Activated CD8-positive, alpha-beta memory T cell treated with anti-CD3 and anti-CD28 coated beads, Interleukin-2, amount 10 ng/mL, durations not matched to agents 7 days and 5 days (primary cell): ENCODE measurements at regions of chr17 and their contacts with region 1.

Region 1: DNA sequence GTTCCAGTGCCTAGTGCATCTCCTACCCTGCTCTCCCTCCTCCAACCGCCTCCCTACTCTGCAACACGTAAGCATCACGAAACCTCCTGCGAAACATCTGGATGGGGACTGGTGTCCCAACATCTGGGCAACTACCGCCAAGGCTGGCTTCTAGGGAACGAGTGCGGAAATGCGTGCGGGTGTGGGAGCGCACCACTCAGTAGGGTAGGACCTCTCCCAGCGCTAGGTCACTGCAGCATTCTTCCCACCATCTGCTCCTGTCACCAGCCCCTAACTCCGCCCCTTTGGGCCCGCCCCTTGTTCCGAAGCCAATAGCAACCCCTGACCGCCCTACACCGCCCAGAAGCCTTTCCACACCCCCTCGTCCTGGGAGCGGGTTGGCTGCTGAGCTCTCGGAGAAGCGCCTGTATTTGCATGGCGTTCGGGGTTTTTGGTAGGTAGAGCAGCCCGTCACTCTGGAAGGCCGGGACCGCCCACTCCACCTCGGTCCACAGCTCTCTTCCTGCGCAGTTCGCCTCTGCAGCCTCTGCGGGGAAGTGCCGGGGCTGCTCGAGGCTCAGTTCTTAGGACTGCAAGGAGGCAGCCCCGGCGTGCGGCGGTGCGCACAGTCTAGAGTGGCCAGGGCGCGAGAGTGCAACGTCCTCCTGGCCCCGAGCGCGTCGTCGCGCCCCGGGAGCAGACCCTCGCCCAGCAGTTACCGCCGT is at the start of gene HS3ST3B1:
- DNase-seq: peak; percentile 100
- ATAC-seq: peak; percentile 90
- H3K4me3 Mint-ChIP-seq: peak within 1 kb of the TSS; percentile 82
- H3K27ac Mint-ChIP-seq: peak within 1 kb of the TSS; percentile 86
- H3K4me1 Mint-ChIP-seq: peaks cover 53% of the 10 kb centered on the region
- H3K27me3 Mint-ChIP-seq: peaks cover 46% of the 10 kb centered on the region
- total RNA-seq, gene HS3ST3B1: 6.9 to 24.9 TPM

Region 2: DNA sequence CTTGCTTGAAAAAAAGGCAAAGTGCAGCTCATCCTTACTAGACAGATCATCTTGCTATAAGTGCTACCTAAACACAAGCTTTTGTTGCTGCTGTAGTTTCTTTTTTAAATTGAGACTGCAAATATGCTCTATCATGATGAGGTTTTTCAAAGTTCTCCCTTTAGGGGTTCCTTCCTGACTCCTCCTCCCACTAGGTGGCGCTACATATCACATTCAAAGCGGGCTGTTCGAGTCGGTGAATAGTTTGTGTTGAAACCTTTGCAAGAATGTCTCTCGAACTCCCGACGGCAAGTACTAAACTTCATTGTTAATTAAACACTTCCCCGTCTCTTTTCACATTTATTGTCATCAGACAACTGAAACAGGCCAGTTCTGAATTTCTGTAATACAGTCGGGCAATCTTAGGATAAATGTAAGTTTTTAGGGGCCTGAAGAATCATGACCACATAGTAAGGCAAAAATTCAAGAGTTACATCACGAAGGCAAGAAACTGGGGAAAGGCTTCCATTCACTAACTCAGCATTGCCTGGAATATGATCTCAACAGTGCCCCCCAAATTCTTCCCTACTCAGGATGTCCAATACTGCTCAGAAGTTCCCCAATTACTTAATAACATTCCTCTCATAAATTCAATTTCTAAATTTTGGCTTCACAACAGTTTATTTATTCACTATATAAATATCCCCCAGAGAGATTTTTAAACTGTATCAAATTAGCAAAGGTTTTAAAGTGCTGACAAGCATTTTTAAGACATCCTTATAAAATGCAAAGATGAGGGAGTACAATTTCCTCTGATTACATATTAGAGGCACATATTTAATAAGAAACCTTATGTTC is 705.7 kb before region 1 on chr17:
- CTCF ChIA-PET with region 1: interaction called, 48 read pairs
- DNase-seq: peak; percentile 82
- ATAC-seq: peak; percentile 77
- H3K4me3 Mint-ChIP-seq: no peak overlapping the region
- H3K27ac Mint-ChIP-seq: no peak overlapping the region
- H3K4me1 Mint-ChIP-seq: peaks cover 6% of the 10 kb centered on the region
- H3K27me3 Mint-ChIP-seq: peaks cover 40% of the 10 kb centered on the region

Region 3: DNA sequence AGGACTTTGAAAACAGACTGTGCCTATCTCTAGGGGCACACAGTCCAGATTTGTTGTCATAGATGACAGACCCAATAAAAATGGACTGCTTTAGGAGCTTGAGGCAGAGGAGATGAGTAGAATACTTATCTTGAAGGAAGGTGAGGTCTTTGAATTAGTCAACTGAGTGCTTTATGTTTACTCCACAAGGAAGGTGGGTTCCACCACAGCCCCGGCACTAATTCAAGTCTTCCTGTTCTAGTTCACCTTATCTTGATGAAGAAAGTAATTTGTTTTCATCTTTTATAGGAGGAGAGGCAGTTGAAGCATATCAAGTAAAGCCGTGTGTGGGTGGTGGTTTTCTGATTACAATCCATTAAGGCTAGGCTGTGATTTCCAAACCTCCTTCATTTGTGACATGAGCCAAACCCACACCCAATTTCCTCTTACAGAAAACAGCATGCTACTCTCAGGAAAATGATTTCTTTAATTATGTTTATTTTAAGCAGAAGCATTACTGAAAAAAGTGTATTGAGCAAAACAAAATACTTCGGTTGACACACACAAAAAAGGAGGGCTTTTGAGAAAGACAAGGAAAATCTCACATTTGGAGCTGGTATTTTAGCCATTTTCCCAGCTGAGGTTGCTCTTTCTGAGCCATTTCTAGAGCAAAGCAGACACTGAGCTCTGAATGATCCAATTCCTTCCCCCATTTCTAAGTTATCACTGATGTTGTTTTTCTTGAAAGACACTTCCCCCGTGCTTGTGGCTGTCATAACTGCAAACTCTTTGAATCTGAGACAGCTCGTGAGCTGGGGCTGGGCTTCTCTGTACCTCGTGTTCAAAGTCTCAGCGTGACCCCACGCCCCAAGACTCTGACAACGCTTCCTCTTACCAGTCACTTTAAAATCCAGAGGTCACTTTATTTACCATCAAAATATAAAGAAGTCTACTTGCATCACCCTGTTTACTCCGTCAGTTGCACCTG is 99.4 kb before region 1 on chr17:
- CTCF ChIA-PET with region 1: interaction called, 15 read pairs
- DNase-seq: peak; percentile 85
- ATAC-seq: peak; percentile 56
- H3K4me3 Mint-ChIP-seq: peak overlapping the region; percentile 32
- H3K27ac Mint-ChIP-seq: peak overlapping the region; percentile 90
- H3K4me1 Mint-ChIP-seq: peaks cover 97% of the 10 kb centered on the region
- H3K27me3 Mint-ChIP-seq: no peaks in the 10 kb centered on the region

Region 4: DNA sequence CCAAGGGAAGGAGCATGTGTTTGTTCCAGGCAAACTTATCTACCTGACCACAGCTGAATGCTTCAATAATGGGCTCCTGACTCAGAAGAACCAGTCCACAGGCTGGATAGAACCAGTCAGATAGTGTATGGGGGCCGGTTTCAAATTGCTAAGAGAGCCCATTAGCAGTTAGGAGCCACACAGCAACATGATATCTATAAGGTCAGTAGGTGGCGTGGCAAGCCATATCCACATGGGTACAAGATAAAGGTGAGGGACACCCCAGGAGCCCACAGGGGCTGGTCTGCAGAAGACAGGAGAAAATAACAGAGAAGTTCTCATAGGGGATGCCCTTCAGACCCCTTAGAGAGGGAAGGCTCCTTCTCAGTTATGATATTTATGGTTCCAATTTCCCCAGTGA is 32.5 kb before region 1 on chr17:
- CTCF ChIA-PET with region 1: no interaction called
- DNase-seq: no peak
- ATAC-seq: no peak
- H3K4me3 Mint-ChIP-seq: no peak overlapping the region
- H3K27ac Mint-ChIP-seq: no peak overlapping the region
- H3K4me1 Mint-ChIP-seq: no peaks in the 10 kb centered on the region
- H3K27me3 Mint-ChIP-seq: peaks cover 11% of the 10 kb centered on the region

Region 5: DNA sequence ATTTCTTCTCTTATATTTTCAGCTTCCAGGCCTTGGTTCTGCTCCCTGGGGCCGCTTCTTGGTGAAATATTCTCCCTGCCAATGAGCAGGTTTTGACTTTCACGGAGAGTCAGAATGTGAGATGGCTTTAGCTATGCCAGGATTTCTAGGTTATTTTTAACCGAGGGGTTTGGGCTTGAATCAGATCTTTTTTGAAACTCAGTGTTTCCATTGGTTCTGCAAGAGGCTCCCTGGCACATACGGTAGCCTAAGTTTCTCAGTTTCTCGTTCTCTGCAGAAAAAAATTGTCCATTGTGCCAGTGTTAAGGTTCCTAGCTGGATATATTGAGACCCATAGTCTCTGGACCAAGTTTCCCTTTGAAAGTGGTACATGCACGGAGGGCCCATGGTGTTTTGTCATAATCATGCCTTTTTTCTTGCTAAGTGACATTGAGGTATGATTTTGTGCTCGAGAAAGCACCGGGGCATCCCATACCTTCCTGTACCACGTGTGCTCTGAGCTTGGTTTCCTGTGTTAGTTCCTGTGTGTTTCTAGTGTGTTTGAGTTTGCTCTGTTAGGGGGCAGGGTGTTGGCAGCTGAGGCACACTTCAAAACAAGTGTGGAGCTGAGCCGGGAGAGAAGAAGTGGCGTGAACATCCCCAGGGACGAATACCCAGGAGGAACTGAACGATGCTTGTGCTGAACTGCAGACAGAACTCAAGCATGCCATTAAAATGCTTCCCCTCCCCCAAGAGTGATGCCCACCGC is 127.3 kb after region 1 on chr17:
- CTCF ChIA-PET with region 1: interaction called, 12 read pairs
- DNase-seq: peak; percentile 76
- ATAC-seq: peak; percentile 100
- H3K4me3 Mint-ChIP-seq: peak overlapping the region; percentile 60
- H3K27ac Mint-ChIP-seq: peak overlapping the region; percentile 81
- H3K4me1 Mint-ChIP-seq: peaks cover 31% of the 10 kb centered on the region
- H3K27me3 Mint-ChIP-seq: no peaks in the 10 kb centered on the region